ENCODE measurements at regions of chr9 and their contacts with region 1.

Region 1: DNA sequence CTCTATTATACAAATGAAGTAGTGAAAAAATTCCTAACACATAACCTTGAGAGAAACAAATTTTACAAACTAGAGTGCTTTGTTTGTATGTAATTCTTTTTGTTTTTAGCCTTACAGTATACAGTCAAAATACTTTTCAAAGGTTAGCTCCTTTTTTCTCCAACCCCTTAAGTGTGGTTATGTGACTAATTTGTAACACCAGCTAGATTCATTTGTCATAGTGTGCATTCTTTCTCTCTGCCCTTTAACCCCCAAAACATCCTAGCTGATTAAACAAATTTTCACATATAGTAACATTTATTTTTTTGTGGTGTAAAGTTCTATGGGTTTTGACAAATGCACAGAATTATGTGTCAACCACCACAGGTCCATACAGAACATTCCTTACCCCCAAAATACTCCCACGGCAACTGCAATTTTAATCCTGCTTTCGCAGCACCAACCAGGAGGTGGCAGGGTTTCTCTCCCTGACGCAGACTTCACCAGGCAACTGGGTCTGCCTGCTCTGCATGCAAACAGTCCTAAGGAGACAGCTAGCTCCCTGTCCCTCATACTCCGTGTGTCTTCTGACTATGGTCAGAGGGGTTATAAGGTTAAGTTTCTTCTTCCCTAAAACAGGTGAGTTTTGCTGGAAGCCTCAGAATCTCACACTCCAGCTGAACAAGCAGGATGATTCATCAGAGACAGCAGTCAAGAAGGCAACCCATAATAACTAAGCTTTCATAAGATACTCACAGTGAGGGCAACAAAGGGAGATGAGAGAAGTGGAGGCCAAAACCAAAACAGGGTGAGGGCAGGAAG is 44.5 kb upstream of the NR5A1 start:
- DNase-seq: peak; percentile 56 to 78
- H3K4me3 ChIP-seq: no peak overlapping the region
- H3K27ac ChIP-seq: no peak overlapping the region
- H3K4me1 ChIP-seq: peaks cover 3 to 8% (median 5%) of the 10 kb centered on the region in 4 experiments; a peak in 5 of 7 replicates
- H3K27me3 ChIP-seq: no peaks in the 10 kb centered on the region
- CTCF ChIP-seq: peak; percentile 86 to 95 (median 93)
- EP300 ChIP-seq: no peak
- POLR2A ChIP-seq: no peak
- RAD21 ChIP-seq: peak; percentile 94 to 98

Region 2: GRCh38 chr9:124399323-124399967 is 152.2 kb before region 1 on chr9:
- CTCF ChIA-PET with region 1: no interaction called
- POLR2A ChIA-PET with region 1: no interaction called
- DNase-seq: peak in 1 of 2 experiments; percentile 56
- H3K4me3 ChIP-seq: no peak overlapping the region
- H3K27ac ChIP-seq: peak overlapping the region; percentile 57
- H3K4me1 ChIP-seq: peaks cover 3 to 14% (median 12%) of the 10 kb centered on the region in 4 experiments
- H3K27me3 ChIP-seq: no peaks in the 10 kb centered on the region
- CTCF ChIP-seq: peak in 2 of 3 experiments; percentile 12 to 21; a peak in 2 of 4 replicates
- EP300 ChIP-seq: no peak
- POLR2A ChIP-seq: no peak
- RAD21 ChIP-seq: no peak

Region 3: DNA sequence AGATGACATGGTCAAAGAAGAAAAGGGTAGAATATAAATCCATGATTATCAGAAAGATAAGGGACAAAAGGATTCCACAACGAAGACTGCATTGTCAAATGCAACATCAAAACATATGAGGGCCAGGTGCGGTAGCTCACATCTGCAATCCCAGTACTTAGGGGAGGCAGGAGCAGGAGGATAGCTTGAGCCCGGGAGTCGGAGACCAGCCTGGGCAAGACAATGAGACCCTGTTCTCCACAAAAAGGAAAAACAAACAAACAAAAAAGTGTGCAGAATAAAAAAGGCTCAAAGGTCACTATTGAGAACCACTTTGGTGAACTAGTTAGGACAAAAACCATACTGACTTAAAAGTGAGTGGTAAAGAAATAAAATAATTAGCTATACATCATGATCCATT is 15.7 kb after region 1 on chr9:
- CTCF ChIA-PET with region 1: interaction called, 17 read pairs
- POLR2A ChIA-PET with region 1: interaction called, 3 read pairs
- DNase-seq: no peak
- H3K4me3 ChIP-seq: no peak overlapping the region
- H3K27ac ChIP-seq: no peak overlapping the region
- H3K4me1 ChIP-seq: peaks cover 5 to 16% (median 11%) of the 10 kb centered on the region in 4 experiments; a peak in 6 of 7 replicates
- H3K27me3 ChIP-seq: no peaks in the 10 kb centered on the region
- CTCF ChIP-seq: no peak
- EP300 ChIP-seq: no peak
- POLR2A ChIP-seq: no peak
- RAD21 ChIP-seq: no peak

Region 4: DNA sequence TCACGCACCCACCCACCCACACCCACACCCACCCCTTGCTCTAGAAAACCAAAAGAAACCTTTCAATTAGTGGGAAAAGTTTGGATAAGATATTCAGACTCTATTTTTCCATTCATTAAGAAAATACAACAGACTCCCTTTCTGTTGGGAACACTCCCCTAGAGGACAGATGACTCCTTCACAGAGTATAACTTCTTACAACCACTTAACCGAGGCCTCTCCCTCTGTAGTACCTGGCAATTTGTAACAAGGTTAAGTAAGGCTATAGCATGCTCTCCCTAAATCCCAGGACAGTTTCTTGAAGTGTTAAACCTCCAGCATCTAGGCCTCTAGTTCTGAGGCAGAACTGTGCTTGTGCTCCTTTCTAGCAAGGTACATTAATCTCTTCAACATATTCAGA is 31.5 kb after region 1 on chr9:
- CTCF ChIA-PET with region 1: interaction called, 30 read pairs
- POLR2A ChIA-PET with region 1: no interaction called
- DNase-seq: no peak
- H3K4me3 ChIP-seq: no peak overlapping the region
- H3K27ac ChIP-seq: no peak overlapping the region
- H3K4me1 ChIP-seq: peaks cover 0 to 10% (median 5%) of the 10 kb centered on the region in 4 experiments; a peak in 3 of 7 replicates
- H3K27me3 ChIP-seq: no peaks in the 10 kb centered on the region
- CTCF ChIP-seq: no peak
- EP300 ChIP-seq: no peak
- POLR2A ChIP-seq: no peak
- RAD21 ChIP-seq: no peak

Region 5: DNA sequence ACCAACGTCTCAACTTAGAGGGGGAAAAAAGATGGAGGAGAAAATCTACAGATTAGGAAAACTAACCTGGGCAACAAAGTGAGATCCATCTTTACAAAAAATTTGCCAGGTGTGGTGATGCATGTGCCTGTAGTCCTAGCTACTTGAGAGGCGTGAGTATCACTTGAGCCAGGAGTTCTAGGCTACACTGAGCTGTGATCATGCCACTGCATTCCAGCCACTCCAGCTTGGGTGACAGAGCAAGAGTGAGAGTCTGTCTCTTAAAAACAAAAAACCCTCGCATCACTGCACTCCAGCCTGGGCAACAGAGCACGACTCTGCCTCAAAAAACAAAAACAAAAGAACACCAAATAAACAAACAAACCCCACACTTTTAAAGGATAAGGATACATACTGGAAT is 53.6 kb after region 1 on chr9:
- CTCF ChIA-PET with region 1: interaction called, 10 read pairs
- POLR2A ChIA-PET with region 1: no interaction called
- DNase-seq: no peak
- H3K4me3 ChIP-seq: no peak overlapping the region
- H3K27ac ChIP-seq: no peak overlapping the region
- H3K4me1 ChIP-seq: no peaks in the 10 kb centered on the region
- H3K27me3 ChIP-seq: no peaks in the 10 kb centered on the region
- CTCF ChIP-seq: no peak
- EP300 ChIP-seq: no peak
- POLR2A ChIP-seq: no peak
- RAD21 ChIP-seq: no peak